ENCODE measurements at regions of chr16 and their contacts with region 1.

Region 1: DNA sequence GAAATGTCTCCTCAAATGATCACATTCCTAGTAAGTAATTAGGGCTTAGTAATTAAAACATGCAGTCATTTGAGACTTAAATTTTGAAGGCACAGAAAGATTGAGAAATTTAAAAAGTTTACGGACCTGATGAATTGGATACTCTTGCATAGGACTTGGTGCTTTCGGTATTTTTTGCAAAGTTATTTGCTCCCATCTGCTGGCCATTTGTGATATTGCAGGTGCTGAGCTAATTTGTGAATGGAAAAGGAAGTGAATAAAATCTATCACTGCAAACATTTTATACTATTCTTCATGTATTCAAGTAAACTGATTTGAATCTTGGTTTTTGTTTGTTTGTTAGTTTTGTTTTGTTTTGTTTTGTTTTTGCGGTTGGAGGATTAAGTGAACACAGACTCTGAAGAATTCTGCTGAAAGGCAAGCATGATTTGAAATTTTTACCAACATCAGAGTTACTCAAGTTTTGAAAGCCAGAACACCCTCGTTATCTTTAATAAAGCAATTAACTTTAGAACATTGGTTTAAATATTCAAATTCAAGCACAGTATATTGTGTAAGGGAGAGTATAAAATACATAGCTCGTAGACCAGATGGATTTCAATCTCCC is 689.5 kb upstream of the RBFOX1 start:
- DNase-seq: peak; percentile 23
- ATAC-seq: no peak

Region 2: GRCh38 chr16:5234295-5235050 is 1408.7 kb before region 1 on chr16:
- intact Hi-C with region 1: loop called in 1 of 2 experiments (anchors 5 kb)
- DNase-seq: no peak
- ATAC-seq: no peak

Region 3: DNA sequence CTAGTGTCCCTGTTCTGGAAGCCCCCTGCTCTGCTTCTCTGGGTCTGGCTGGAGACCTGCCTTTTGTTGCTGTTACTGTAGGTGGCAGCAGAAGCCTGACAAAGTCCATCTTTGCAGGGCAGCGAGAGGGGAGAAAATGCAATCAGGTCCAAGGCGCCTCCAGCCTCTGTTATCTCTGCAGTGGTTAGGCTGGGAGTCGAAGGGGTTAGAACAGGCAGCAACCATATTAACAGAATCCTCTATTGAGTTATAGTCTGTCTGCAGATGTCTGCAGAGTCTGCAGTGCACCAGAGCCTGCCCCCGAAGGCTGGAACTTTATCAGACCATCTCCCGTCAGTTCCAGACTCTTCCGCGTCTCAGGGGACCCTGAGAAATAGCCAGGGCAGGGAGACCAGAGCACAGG is 1140.7 kb before region 1 on chr16:
- intact Hi-C with region 1: loop called in 1 of 2 experiments (anchors 10 kb)
- DNase-seq: no peak
- ATAC-seq: peak in 1 of 2 donors; percentile 24

Region 4: GRCh38 chr16:6777624-6778023 is 134.4 kb after region 1 on chr16:
- intact Hi-C with region 1: no loop called
- DNase-seq: no peak
- ATAC-seq: no peak